HEK293 (cell line): ENCODE measurements at regions of chr9 and their contacts with region 1.

Region 1: DNA sequence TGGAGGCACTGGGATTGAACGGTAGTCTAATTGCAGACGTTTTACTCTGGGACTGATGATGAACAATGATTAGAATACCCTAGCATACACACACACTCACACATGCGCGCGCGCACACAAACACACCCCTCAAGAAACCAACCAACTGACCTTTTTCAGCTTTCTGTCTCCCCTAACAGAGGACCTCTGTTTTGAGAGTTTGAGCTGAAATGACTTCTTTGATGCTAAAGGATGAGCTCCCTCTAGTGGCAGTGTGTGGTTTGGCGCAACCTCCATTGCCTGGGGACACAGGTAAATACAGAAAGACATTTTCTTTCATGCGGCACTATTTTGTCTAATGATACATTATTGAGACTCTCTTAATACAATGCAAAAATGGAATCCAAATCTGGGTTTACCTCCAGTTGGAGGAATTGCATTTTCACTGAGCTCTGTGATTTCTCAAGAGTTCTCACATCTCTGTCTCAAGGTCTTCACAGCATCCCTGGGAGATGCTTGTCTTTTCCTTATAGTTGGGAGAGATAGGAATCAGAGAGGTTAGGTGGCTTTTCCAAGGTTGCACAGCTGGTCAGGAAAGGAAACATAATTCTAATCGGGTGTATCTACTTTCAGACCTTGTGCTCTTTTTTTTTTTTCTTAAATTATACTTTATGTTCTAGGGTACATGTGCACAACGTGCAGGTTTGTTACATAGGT is 187.5 kb downstream of the TMEM38B start:
- H3K4me3 ChIP-seq: no peak overlapping the region
- H3K27ac ChIP-seq: no peak overlapping the region
- H3K4me1 ChIP-seq: peaks cover 3% of the 10 kb centered on the region; the same call in 1 of the 2 replicates
- CTCF ChIP-seq: no peak; the same call in 1 of the 2 replicates

Region 2: DNA sequence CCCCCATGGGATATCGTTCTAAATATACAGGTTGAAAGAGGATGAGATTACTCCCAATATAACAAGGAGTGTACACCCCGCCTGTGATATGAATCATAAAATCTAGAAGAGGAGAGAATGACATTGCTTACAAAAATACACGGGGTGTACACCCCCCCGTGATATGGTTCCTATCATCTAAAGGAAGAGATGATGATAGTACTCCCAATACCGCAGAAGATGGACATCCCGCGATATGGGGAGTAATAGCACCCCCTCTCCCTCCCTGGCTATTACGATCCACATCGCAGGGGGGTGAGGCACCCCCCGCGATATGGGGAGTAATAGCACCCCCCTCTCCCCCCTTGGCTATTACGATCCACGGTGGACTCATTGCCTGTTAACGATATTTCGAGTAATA is 62.9 kb before region 1 on chr9:
- CTCF ChIA-PET with region 1: no interaction called
- POLR2A ChIA-PET with region 1: no interaction called
- H3K4me3 ChIP-seq: no peak overlapping the region
- H3K27ac ChIP-seq: no peak overlapping the region
- H3K4me1 ChIP-seq: no peaks in the 10 kb centered on the region
- CTCF ChIP-seq: no peak

Region 3: GRCh38 chr9:105842023-105842644 is 39.7 kb before region 1 on chr9:
- CTCF ChIA-PET with region 1: interaction called, 104 read pairs
- POLR2A ChIA-PET with region 1: no interaction called
- H3K4me3 ChIP-seq: no peak overlapping the region
- H3K27ac ChIP-seq: no peak overlapping the region
- H3K4me1 ChIP-seq: no peaks in the 10 kb centered on the region
- CTCF ChIP-seq: no peak

Region 4: DNA sequence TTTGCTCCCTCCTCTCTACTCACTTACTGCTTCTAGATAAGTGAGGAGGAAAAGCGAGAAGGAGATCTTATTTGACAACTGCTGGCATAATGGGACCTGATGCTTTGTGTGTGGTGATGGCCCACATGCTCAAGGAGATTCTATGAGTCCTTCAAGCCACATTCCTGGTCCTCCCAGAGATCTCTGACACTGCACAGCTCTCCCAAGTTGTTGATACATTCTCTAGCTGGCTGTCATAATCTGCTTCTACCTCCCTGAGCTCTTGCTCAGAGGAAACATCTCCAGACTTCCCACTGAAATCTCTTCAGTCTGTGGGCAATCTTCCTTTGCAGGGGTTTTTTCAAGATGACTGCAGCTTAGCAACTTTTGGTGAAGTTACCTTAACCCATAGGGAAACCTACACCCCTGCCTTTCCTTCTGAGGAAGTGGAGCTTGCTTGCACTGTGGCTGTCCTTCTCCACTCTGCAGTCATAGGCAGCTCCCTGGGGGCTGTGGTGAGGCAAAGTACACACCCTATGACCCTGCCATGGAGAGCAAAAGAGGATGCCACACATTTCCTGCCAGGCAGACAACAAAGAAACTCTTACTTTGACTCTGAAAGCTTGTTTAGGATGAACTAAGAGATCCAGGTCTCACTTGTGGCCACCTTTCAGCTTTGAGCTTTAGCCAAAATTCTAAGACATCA is 23.7 kb before region 1 on chr9:
- CTCF ChIA-PET with region 1: interaction called, 14 read pairs
- POLR2A ChIA-PET with region 1: no interaction called
- H3K4me3 ChIP-seq: no peak overlapping the region
- H3K27ac ChIP-seq: no peak overlapping the region
- H3K4me1 ChIP-seq: no peaks in the 10 kb centered on the region
- CTCF ChIP-seq: no peak

Region 5: GRCh38 chr9:105864248-105864898 is 17.4 kb before region 1 on chr9:
- CTCF ChIA-PET with region 1: interaction called, 11 read pairs
- POLR2A ChIA-PET with region 1: no interaction called
- H3K4me3 ChIP-seq: no peak overlapping the region
- H3K27ac ChIP-seq: no peak overlapping the region
- H3K4me1 ChIP-seq: no peaks in the 10 kb centered on the region
- CTCF ChIP-seq: no peak

Region 6: DNA sequence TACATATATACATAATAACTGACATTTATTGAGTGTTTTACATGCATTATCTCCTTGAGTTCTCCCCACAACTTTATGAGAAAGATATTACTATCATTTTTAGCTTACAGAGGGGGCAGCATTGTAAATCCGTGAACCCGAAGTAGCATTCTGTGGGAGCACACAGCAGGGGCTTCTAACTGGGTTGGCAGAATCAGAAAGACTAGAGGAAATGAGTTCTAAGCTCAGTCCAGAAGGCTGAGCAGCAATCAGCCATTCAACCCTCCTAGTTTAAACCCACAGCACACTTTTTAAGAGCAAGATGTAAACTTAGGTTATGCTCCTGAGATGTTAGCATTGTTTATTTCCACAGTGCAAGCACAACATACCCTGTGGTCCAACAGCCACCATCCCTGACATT is 10.3 kb before region 1 on chr9:
- CTCF ChIA-PET with region 1: interaction called, 13 read pairs
- POLR2A ChIA-PET with region 1: no interaction called
- H3K4me3 ChIP-seq: no peak overlapping the region
- H3K27ac ChIP-seq: no peak overlapping the region
- H3K4me1 ChIP-seq: no peaks in the 10 kb centered on the region
- CTCF ChIP-seq: no peak

Region 7: DNA sequence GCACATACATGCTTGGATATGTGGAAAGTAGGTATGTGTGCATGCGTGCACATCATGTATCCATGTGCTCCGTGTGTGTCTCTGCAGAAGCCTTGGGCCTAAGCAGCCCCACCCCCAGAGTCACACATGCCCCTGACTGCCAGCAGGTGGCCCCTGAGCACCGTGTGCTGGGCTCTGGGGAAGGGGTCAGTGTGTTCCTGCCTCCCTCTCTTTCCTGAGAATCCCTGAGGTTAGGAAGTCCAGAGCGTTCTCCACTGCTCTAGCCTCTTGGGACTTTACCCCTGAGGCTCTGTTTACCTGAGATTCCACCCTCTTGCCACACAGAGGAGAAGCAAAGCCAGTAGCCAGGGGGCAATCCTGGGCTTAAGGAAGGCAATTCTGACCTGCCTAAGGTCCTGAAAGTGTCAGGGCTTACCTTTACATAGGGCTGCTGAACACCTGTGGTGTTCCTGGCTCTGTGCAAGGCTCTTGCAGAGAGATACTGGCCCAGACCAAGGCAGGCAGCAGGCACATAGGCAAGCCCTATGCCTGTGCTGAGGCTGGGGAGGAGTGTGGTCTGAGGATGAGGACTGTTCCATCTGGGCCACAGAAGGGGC is 19.8 kb after region 1 on chr9:
- CTCF ChIA-PET with region 1: interaction called, 18 read pairs
- POLR2A ChIA-PET with region 1: no interaction called
- H3K4me3 ChIP-seq: no peak overlapping the region
- H3K27ac ChIP-seq: no peak overlapping the region
- H3K4me1 ChIP-seq: no peaks in the 10 kb centered on the region
- CTCF ChIP-seq: peak; percentile 46; the same call in 1 of the 2 replicates